ENCODE measurements at regions of chr13 and their contacts with region 1.

Region 1: DNA sequence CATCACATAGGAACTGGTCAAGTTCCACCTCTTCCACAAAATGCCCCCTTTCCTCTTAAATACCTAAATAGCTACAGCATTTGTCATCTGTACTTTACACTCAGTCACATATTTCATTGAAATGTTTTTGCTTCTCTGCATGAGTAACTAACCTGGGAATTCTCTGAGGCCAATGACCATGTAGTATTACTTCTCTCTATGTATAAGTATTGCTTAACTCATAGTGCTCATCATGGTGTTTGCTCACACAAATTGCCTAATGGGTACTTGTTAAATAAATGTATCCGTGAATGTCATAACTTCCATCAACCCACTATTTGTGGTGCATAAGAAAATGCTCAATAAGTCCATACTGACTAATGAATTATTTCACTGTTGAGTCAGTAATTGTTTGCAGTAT is 115.5 kb downstream of the FGF14 start:
- DNase-seq: no peak

Region 2: GRCh38 chr13:101127741-101128353 is 1158.5 kb before region 1 on chr13:
- intact Hi-C with region 1: loop called in 1 of 2 experiments (anchors 5 kb)
- DNase-seq: no peak

Region 3: GRCh38 chr13:102367816-102368215 is 81.5 kb after region 1 on chr13:
- intact Hi-C with region 1: no loop called
- DNase-seq: no peak